Ovary (tissue), 10 donors: ENCODE measurements at regions of chr1 and their contacts with region 1.

Region 1: DNA sequence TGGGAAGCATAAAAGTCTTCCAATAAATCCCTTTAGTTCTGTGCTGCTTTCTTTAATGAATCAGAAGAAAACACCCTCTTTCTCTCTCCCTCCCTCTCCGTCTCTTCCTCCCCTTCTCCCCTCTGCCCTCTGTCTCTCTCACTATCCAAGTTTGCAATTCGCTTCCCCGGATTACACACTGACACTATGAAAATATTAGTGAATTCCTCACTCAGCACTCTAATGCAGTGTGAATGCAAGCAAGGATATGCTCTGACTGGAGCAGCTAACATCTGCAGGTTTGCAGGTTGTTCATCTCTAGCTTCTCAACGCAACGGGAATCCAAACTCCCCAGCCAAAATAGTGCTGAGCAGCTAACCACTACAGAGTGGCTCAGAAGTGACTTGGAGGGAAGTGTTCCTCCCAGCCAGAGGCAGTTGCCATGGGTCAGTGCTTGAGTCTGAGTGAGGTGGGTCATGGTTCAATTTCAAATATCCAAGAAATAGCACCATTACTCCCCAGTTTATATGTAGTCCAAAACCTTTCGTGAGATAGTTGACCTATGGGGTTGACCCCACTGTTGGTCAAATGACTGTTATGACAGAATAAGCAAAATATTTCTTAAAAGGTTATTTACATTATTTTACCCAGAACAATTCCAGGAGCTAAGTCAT is 77.6 kb upstream of the CD55 start:
- DNase-seq: no peak
- H3K4me3 ChIP-seq: no peak overlapping the region
- H3K27ac ChIP-seq: peak overlapping the region in 1 of 2 donors; percentile 40
- H3K4me1 ChIP-seq: peaks cover 10% of the 10 kb centered on the region
- H3K27me3 ChIP-seq: no peaks in the 10 kb centered on the region
- CTCF ChIP-seq: no peak
- EP300 ChIP-seq: no peak
- POLR2A ChIP-seq: no peak

Region 2: DNA sequence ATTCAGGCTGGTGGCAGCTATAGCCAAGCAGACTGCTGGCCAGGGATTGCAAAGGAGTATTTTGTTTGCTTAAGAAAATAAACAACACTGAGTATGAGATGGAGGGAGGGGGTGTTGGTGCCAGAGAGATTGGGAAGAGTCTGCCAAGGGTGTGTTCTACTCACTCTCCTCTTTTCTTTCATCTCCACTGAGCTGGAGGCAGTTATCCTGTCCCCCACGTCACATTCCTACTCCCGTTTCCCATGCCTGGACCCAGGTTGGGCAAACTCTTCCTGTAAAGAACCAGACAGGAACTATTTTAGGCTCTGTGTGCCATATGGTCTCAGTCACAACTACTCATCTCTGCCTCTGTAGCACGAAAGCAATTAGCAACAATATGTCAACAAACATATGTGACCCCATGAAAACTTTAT is 348.0 kb before region 1 on chr1:
- intact Hi-C with region 1: no loop called
- DNase-seq: no peak
- H3K4me3 ChIP-seq: no peak overlapping the region
- H3K27ac ChIP-seq: no peak overlapping the region
- H3K4me1 ChIP-seq: peaks cover 8% of the 10 kb centered on the region
- H3K27me3 ChIP-seq: no peaks in the 10 kb centered on the region
- CTCF ChIP-seq: no peak
- EP300 ChIP-seq: no peak
- POLR2A ChIP-seq: no peak

Region 3: DNA sequence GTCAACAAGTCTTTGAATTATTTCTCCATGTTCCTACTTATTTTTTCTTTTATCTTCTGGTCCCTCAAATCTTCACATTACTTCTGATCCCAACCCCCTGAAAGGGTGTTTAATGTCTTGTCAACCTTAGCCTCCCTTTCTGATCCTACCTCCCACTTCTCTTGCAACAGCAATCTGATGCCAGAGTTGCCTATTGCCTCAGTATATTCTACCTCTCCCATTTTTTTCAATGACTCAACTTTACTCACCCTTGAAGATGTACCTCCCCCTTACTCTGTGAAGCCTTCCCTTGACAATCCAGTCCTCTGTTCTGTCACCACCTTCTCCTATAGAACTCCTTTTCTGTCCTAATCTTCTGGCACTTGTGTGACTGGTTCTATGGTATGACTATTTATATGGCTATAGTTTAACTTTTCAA is 21.9 kb before region 1 on chr1:
- intact Hi-C with region 1: loop called in 1 of 4 experiments (anchors 2 kb)
- DNase-seq: no peak
- H3K4me3 ChIP-seq: no peak overlapping the region
- H3K27ac ChIP-seq: no peak overlapping the region
- H3K4me1 ChIP-seq: peaks cover 11% of the 10 kb centered on the region
- H3K27me3 ChIP-seq: no peaks in the 10 kb centered on the region
- CTCF ChIP-seq: no peak
- EP300 ChIP-seq: no peak
- POLR2A ChIP-seq: no peak